ENCODE measurements at regions of chr11 and their contacts with region 1.

Region 1: GRCh38 chr11:60345489-60345888 is 18.4 kb downstream of the MS4A6E start:
- DNase-seq: peak; percentile 57
- ATAC-seq: no peak
- H3K4me3 ChIP-seq: no peak overlapping the region
- H3K4me3 Mint-ChIP-seq: no peak overlapping the region
- H3K27ac ChIP-seq: no peak overlapping the region
- H3K27ac Mint-ChIP-seq: peak overlapping the region; percentile 55
- H3K4me1 ChIP-seq: peaks cover 22 to 26% of the 10 kb centered on the region in 2 donors
- H3K4me1 Mint-ChIP-seq: peaks cover 24% of the 10 kb centered on the region
- H3K27me3 ChIP-seq: no peaks in the 10 kb centered on the region
- H3K27me3 Mint-ChIP-seq: no peaks in the 10 kb centered on the region
- CTCF ChIP-seq: peak; percentile 72

Region 2: DNA sequence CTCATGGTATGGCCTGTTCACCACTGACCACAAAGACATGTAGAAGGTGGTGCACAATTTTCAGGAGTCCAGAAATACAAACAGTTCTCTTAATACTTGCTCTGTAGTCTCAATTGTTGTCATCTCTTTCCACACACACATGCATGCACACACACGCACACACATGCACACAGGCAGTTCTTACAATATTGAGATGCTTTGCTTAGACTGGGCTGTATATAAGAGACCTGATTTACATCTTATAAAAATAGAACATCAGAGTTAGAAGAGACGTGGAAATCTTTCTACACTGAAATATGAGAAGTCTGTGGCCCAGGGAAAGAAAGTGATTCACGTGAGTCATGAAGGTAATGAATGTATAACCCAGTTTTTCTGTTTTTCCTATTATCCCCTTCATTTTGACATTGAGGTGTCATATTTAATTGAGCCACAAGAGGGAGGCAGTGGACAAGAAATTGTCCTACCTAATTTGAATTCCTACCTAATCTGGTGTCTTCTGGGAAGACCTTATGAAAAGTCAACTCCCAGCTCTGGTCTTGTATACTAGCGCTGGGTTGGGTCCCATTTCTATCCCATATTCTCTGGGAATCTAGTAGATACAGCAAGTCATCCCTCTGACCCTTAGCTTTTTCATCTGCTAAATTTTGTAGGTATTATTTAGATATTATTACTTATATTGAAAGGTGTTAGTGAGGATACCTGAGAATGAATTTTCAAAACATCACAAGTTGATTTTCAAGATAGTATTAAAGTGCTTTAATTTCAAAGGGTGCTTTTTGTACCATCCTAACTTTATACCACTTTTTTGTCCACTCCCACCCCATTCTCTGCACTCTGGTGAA is 79.9 kb before region 1 on chr11:
- CTCF ChIA-PET with region 1: interaction called, 153 read pairs
- POLR2A ChIA-PET with region 1: no interaction called
- intact Hi-C with region 1: loop called (anchors 1 kb)
- DNase-seq: peak; percentile 76
- ATAC-seq: peak; percentile 43
- H3K4me3 ChIP-seq: no peak overlapping the region
- H3K4me3 Mint-ChIP-seq: no peak overlapping the region
- H3K27ac ChIP-seq: no peak overlapping the region
- H3K27ac Mint-ChIP-seq: no peak overlapping the region
- H3K4me1 ChIP-seq: no peaks in the 10 kb centered on the region
- H3K4me1 Mint-ChIP-seq: peaks cover 4% of the 10 kb centered on the region
- H3K27me3 ChIP-seq: no peaks in the 10 kb centered on the region
- H3K27me3 Mint-ChIP-seq: no peaks in the 10 kb centered on the region
- CTCF ChIP-seq: peak; percentile 98

Region 3: GRCh38 chr11:60455531-60456042 is 110.1 kb after region 1 on chr11 and contains the start of gene MS4A1:
- CTCF ChIA-PET with region 1: interaction called, 48 read pairs
- POLR2A ChIA-PET with region 1: no interaction called
- intact Hi-C with region 1: no loop called
- DNase-seq: peak; percentile 95
- ATAC-seq: peak; percentile 83
- H3K4me3 ChIP-seq: peak within 1 kb of the TSS; percentile 63 to 96 (median 74)
- H3K4me3 Mint-ChIP-seq: peak within 1 kb of the TSS; percentile 90
- H3K27ac ChIP-seq: peak within 1 kb of the TSS; percentile 93 to 98
- H3K27ac Mint-ChIP-seq: peak within 1 kb of the TSS; percentile 99
- H3K4me1 ChIP-seq: peaks cover 44% of the 10 kb centered on the region in 2 donors
- H3K4me1 Mint-ChIP-seq: peaks cover 65% of the 10 kb centered on the region
- H3K27me3 ChIP-seq: no peaks in the 10 kb centered on the region
- H3K27me3 Mint-ChIP-seq: no peaks in the 10 kb centered on the region
- CTCF ChIP-seq: no peak
- total RNA-seq, gene MS4A1: 1,202 and 1,215 TPM in 2 replicates

Region 4: GRCh38 chr11:60485986-60486385 is 140.5 kb after region 1 on chr11:
- CTCF ChIA-PET with region 1: interaction called, 29 read pairs
- POLR2A ChIA-PET with region 1: no interaction called
- intact Hi-C with region 1: loop called (anchors 1 kb)
- DNase-seq: peak; percentile 88
- ATAC-seq: peak; percentile 93
- H3K4me3 ChIP-seq: no peak overlapping the region
- H3K4me3 Mint-ChIP-seq: no peak overlapping the region
- H3K27ac ChIP-seq: no peak overlapping the region
- H3K27ac Mint-ChIP-seq: peak overlapping the region; percentile 4
- H3K4me1 ChIP-seq: peaks cover 39 to 47% of the 10 kb centered on the region in 2 donors
- H3K4me1 Mint-ChIP-seq: peaks cover 54% of the 10 kb centered on the region
- H3K27me3 ChIP-seq: no peaks in the 10 kb centered on the region
- H3K27me3 Mint-ChIP-seq: no peaks in the 10 kb centered on the region
- CTCF ChIP-seq: peak; percentile 96

Region 5: GRCh38 chr11:60615497-60615896 is 270.0 kb after region 1 on chr11:
- CTCF ChIA-PET with region 1: interaction called, 120 read pairs
- POLR2A ChIA-PET with region 1: no interaction called
- intact Hi-C with region 1: loop called (anchors 1 kb)
- DNase-seq: no peak
- ATAC-seq: no peak
- H3K4me3 ChIP-seq: no peak overlapping the region
- H3K4me3 Mint-ChIP-seq: no peak overlapping the region
- H3K27ac ChIP-seq: no peak overlapping the region
- H3K27ac Mint-ChIP-seq: no peak overlapping the region
- H3K4me1 ChIP-seq: peaks cover 0 to 7% of the 10 kb centered on the region in 2 donors
- H3K4me1 Mint-ChIP-seq: peaks cover 7% of the 10 kb centered on the region
- H3K27me3 ChIP-seq: no peaks in the 10 kb centered on the region
- H3K27me3 Mint-ChIP-seq: peaks cover 8% of the 10 kb centered on the region
- CTCF ChIP-seq: no peak

Region 6: GRCh38 chr11:60634126-60634525 is 288.6 kb after region 1 on chr11:
- CTCF ChIA-PET with region 1: interaction called, 26 read pairs
- POLR2A ChIA-PET with region 1: no interaction called
- intact Hi-C with region 1: no loop called
- DNase-seq: peak; percentile 60
- ATAC-seq: peak; percentile 40
- H3K4me3 ChIP-seq: no peak overlapping the region
- H3K4me3 Mint-ChIP-seq: peak overlapping the region; percentile 61
- H3K27ac ChIP-seq: no peak overlapping the region
- H3K27ac Mint-ChIP-seq: peak overlapping the region; percentile 2
- H3K4me1 ChIP-seq: peaks cover 32 to 34% of the 10 kb centered on the region in 2 donors
- H3K4me1 Mint-ChIP-seq: peaks cover 34% of the 10 kb centered on the region
- H3K27me3 ChIP-seq: no peaks in the 10 kb centered on the region
- H3K27me3 Mint-ChIP-seq: peaks cover 15% of the 10 kb centered on the region
- CTCF ChIP-seq: peak; percentile 60

Measured in B cell (primary cell).